Thyroid gland (tissue), 4 donors: ENCODE measurements at regions of chr1 and their contacts with region 1.

Region 1: GRCh38 chr1:27428316-27429028 is 36.0 kb downstream of the GPR3 start:
- DNase-seq: peak; percentile 78 to 81
- H3K4me3 ChIP-seq: no peak overlapping the region
- H3K27ac ChIP-seq: peak overlapping the region; percentile 85 to 96 (median 86)
- H3K4me1 ChIP-seq: peaks cover 63 to 72% of the 10 kb centered on the region in 2 donors
- H3K27me3 ChIP-seq: no peaks in the 10 kb centered on the region
- CTCF ChIP-seq: no peak
- POLR2A ChIP-seq: peak in 1 of 2 donors; percentile 33

Region 2: GRCh38 chr1:27489910-27490741 is 61.7 kb after region 1 on chr1 and contains the start of gene WASF2:
- intact Hi-C with region 1: loop called (anchors 10 kb)
- DNase-seq: peak; percentile 97 to 98
- H3K4me3 ChIP-seq: peak within 1 kb of the TSS; percentile 54 to 95 (median 88)
- H3K27ac ChIP-seq: peak within 1 kb of the TSS; percentile 95 to 99 (median 98)
- H3K4me1 ChIP-seq: peaks cover 18 to 41% of the 10 kb centered on the region in 2 donors
- H3K27me3 ChIP-seq: no peaks in the 10 kb centered on the region
- CTCF ChIP-seq: peak in 2 of 6 experiments; percentile 24 to 26
- POLR2A ChIP-seq: peak; percentile 85 to 96
- total RNA-seq, gene WASF2: 38.3 to 47.7 (median 46.7) TPM

Region 3: DNA sequence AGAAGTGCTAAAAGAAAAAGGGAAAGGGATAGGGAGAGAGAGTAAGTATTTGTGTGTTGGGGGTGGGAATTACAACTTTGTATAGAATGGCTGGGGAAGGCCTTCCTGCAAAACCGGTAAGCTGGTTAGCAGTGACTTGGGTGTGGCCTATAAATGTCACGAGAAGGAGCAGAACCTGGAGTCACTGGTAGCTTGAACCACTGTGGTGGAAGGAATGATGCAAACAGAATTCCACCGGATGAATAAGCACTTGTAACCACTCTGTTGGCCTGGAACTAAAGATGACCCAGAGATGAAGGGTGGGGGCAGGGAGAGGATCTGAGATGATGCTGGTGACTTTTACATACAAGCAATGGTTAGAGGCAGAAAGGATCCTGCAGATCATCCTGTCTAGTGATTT is 540.2 kb after region 1 on chr1:
- intact Hi-C with region 1: no loop called
- DNase-seq: no peak
- H3K4me3 ChIP-seq: no peak overlapping the region
- H3K27ac ChIP-seq: no peak overlapping the region
- H3K4me1 ChIP-seq: peaks cover 6 to 24% of the 10 kb centered on the region in 2 donors
- H3K27me3 ChIP-seq: no peaks in the 10 kb centered on the region
- CTCF ChIP-seq: no peak
- POLR2A ChIP-seq: no peak